Activated CD4-positive, alpha-beta memory T cell treated with anti-CD3 and anti-CD28 coated beads for 36 hours (primary cell): ENCODE measurements at regions of chr19 and their contacts with region 1.

Region 1: GRCh38 chr19:29528350-29528945 is 2.7 kb downstream of the VSTM2B start:
- DNase-seq: peak; percentile 82
- H3K4me3 Mint-ChIP-seq: peak overlapping the region; percentile 29
- H3K27ac Mint-ChIP-seq: no peak overlapping the region
- H3K4me1 Mint-ChIP-seq: peaks cover 34% of the 10 kb centered on the region
- H3K27me3 Mint-ChIP-seq: peaks cover 68% of the 10 kb centered on the region

Region 2: DNA sequence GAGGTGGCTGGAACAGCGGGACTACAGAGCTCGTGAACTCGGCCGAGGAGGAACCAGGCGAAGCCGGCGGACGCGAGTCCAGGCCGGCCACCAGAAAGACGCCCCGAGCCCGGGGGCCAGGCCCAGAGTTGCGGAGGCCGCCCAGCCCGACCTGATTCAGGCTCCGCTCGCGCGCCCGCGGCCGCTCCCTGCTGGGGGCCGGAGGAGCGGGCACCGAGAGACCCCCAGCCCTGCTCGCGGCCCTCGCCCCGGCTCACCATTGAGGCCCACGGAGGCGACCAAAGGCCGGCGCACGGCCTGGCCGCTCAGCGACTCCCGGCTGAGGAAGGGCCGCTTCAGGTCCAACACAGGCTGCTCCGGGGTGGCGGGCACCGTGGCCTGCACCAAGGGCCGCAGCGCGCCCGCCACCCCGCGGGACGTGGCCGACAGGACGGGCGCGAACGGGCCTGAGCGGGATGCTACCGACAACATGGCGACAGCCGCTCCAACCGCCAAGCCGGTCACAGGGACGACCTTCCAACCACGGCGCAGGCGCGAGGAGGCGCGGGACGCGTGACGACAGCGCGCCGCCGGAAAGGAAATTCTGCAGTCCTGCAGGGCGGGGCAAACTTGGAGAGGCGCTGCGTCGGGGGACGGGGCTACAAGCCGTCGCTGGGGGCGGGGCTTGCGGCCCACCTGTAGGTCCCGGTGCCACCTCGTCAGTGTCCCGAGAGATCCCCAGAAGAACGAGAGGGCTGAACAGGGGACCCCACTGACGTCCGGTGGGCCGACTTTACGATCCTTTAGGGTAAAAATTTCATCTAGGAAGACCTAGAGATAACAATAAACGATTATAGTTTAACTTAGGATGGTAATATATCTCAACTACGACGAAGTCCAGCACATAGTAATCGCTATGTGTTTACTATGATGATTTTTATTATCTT is 315.5 kb before region 1 on chr19 and contains the start of gene UQCRFS1:
- CTCF ChIA-PET with region 1: no interaction called
- POLR2A ChIA-PET with region 1: no interaction called
- intact Hi-C with region 1: loop called (anchors 5 kb)
- DNase-seq: peak; percentile 98
- H3K4me3 Mint-ChIP-seq: peak within 1 kb of the TSS; percentile 95
- H3K27ac Mint-ChIP-seq: peak within 1 kb of the TSS; percentile 94
- H3K4me1 Mint-ChIP-seq: peaks cover 42% of the 10 kb centered on the region
- H3K27me3 Mint-ChIP-seq: peaks cover 2% of the 10 kb centered on the region
- total RNA-seq, gene UQCRFS1: 42.0 to 43.9 TPM

Region 3: DNA sequence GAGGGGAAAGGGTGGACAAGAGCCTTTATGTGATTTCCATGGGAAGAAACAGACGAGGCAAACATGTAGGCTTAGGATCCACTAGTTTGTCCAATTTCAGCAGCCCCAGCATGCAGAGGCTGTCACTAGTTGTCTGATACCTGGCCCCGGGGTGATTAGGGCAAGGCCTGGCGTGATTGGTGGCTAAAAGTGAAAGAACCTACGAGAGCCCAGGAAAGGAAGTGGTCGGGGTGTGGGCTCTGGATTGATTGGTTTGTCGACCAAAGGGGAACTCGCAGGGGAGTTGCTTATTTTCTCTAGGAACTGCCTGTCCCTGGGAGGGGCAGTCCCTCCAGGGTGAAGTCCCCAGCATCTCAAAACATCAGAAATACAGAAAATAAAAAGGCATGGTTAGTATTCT is 251.3 kb before region 1 on chr19:
- CTCF ChIA-PET with region 1: no interaction called
- POLR2A ChIA-PET with region 1: no interaction called
- intact Hi-C with region 1: loop called (anchors 5 kb)
- DNase-seq: peak; percentile 75
- H3K4me3 Mint-ChIP-seq: no peak overlapping the region
- H3K27ac Mint-ChIP-seq: no peak overlapping the region
- H3K4me1 Mint-ChIP-seq: peaks cover 6% of the 10 kb centered on the region
- H3K27me3 Mint-ChIP-seq: peaks cover 15% of the 10 kb centered on the region

Region 4: DNA sequence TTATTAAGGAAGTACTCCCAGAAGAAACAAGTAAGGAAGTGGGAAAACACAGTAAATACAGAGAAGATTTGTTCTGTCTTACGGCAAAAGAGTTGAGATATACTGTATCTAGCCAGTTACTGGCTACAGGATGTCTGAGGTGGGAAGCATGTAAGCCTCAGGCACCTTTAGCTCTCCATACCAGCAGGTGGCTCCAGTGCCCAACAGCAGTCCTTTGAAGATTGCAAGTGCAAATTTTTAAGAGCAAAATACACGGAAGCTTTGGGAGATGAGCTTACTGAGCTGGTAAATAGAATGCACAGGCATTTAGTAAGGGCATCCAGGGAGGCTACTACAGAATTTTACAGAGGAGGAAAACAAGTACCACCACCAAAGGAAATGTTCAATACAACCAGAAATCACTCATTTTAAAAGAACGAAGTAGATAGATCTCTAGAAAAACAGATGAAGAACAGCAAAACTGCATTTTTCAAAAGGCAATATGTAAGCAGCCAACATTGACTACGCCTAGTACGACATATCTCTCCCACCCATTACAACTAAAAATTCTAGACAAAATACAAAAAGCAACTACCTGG is 60.5 kb before region 1 on chr19:
- CTCF ChIA-PET with region 1: interaction called, 10 read pairs
- POLR2A ChIA-PET with region 1: no interaction called
- intact Hi-C with region 1: no loop called
- DNase-seq: peak; percentile 47
- H3K4me3 Mint-ChIP-seq: no peak overlapping the region
- H3K27ac Mint-ChIP-seq: no peak overlapping the region
- H3K4me1 Mint-ChIP-seq: peaks cover 3% of the 10 kb centered on the region
- H3K27me3 Mint-ChIP-seq: peaks cover 23% of the 10 kb centered on the region

Region 5: DNA sequence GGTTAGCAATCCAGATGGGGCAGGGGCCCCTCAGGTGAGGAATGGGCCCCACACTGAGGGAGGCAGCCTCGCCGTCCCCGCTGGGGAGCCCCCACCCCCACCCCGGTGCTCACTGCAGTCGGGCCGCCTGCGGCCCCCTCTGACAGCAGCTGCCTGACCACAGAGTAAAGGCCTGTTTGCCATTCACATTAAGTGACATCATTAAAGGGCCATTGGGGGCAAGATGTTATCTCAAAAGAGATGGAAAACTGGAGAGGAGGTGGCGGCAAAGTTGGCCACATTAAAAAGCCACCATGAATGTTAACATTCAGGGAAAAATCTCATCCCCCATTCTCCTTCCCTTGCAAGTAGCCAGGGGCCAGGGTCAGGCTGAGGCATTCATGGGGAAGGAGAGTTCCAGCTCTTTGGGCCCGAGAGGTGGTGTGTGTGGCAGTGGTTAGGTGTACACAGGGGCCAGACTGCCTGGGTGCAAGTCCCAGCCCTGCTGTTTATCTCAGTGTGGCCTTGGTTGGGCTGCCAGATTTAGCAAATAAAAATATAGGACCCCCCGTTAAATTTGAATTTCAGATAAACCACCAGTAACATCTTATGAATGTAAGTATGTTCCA is 18.2 kb after region 1 on chr19:
- CTCF ChIA-PET with region 1: no interaction called
- POLR2A ChIA-PET with region 1: no interaction called
- intact Hi-C with region 1: no loop called
- DNase-seq: no peak
- H3K4me3 Mint-ChIP-seq: no peak overlapping the region
- H3K27ac Mint-ChIP-seq: no peak overlapping the region
- H3K4me1 Mint-ChIP-seq: no peaks in the 10 kb centered on the region
- H3K27me3 Mint-ChIP-seq: peaks cover 22% of the 10 kb centered on the region

Region 6: DNA sequence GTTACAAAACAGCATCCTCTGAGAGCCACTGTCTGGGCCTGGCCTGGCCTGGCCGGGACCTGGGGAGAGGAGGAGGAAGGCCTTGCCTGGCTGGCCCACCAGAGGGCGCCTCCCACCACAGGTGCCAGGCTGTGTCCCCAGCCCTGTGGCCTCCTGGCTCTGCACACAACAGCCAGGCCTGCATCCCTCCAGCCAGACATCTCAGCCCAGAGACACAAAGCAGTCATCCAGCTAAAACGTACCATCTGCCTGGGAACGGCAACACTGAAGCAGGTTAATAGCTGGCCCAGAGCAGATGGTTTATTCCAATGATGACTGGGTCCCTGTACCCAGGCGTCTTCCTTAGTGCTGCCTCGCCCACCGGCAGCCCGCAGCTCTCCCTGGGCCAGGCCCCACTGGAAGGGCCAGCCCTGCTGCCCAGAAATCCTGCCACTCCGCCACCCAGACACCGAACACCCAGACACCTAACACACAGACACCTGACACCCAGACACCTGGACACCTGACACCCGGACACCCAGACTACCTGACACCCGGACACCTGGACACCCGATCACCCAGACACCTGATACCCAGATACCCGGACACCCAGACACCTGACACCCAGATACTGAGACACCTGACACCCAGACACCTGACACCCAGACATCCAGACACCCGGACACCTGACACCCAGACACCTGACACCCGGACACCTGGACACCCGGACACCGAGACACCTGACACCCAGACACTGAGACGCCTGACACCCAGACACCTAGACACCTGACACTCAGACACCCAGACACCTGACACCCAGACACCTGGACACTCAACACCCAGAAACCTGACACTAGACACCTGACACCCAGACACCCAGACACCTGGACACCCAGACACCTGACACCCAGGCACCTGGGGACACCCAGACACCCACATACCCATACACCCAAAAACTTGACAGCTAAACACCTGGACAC is 166.5 kb after region 1 on chr19:
- CTCF ChIA-PET with region 1: interaction called, 3 read pairs
- POLR2A ChIA-PET with region 1: no interaction called
- intact Hi-C with region 1: loop called (anchors 5 kb)
- DNase-seq: peak; percentile 87
- H3K4me3 Mint-ChIP-seq: no peak overlapping the region
- H3K27ac Mint-ChIP-seq: no peak overlapping the region
- H3K4me1 Mint-ChIP-seq: peaks cover 11% of the 10 kb centered on the region
- H3K27me3 Mint-ChIP-seq: no peaks in the 10 kb centered on the region

Region 7: GRCh38 chr19:30227661-30228428 is 699.4 kb after region 1 on chr19:
- CTCF ChIA-PET with region 1: no interaction called
- POLR2A ChIA-PET with region 1: no interaction called
- intact Hi-C with region 1: loop called (anchors 2 kb)
- DNase-seq: peak; percentile 73
- H3K4me3 Mint-ChIP-seq: peak overlapping the region; percentile 73
- H3K27ac Mint-ChIP-seq: no peak overlapping the region
- H3K4me1 Mint-ChIP-seq: peaks cover 20% of the 10 kb centered on the region
- H3K27me3 Mint-ChIP-seq: peaks cover 65% of the 10 kb centered on the region